Left colon (tissue), 2 donors: ENCODE measurements at regions of chr3 and their contacts with region 1.

Region 1: GRCh38 chr3:14124615-14125190 is at the starts of genes CHCHD4 and TMEM43:
- DNase-seq: peak; percentile 99 to 100
- ATAC-seq: peak; percentile 85
- total RNA-seq, gene CHCHD4: 17.6 to 18.9 TPM
- total RNA-seq, gene TMEM43: 25.3 to 29.2 TPM

Region 2: GRCh38 chr3:13895155-13896105 is 229.3 kb before region 1 on chr3:
- intact Hi-C with region 1: loop called in 1 of 2 experiments (anchors 10 kb)
- DNase-seq: peak; percentile 95 to 97
- ATAC-seq: peak; percentile 98